Dendritic cell treated with granulocyte-macrophage colony-stimulating factor and Interleukin-4, amounts not matched to agents 40 ng/mL and 50 ng/mL, for 4 days (primary cell): ENCODE measurements at regions of chr19 and their contacts with region 1.

Region 1: GRCh38 chr19:1247892-1248785 is at the start of gene MIDN:
- H3K4me3 Mint-ChIP-seq: peak within 1 kb of the TSS; percentile 83
- H3K27ac Mint-ChIP-seq: peak within 1 kb of the TSS; percentile 93
- H3K4me1 Mint-ChIP-seq: peaks cover 48% of the 10 kb centered on the region
- H3K27me3 Mint-ChIP-seq: no peaks in the 10 kb centered on the region

Region 2: DNA sequence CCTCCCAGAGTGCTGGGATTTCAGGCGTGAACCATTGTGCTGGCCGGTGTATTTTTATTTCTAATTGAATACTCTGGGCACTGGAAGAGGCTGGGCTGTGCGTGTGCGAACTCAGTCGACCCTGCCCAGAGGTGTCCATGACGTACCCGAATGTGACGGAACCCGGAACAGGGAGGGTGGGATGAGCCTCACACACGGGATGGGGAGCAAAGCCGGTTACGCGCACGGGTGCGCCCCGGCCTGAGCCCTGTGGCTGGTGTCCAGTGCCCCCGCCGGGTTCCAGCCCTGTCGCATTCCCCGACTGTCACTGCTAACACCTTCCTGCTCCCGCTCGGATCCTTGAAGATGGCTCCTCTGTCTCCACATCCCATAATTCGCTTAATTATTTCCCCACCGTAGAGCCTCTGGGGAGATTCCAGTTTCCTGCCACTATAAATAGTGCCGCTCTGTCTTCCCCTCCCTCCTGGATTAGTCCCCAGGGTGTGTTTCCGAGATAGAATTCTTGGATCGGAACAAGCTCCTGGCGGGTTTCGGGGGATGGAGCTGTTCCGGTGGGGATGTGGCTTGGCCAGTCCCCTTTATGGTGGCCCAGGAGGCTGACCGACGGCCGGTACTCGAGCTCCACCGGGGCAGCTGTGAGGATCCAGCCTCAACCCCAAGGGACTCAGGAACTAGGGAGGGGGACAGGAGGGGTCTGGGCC is 96.1 kb before region 1 on chr19:
- intact Hi-C with region 1: no loop called
- H3K4me3 Mint-ChIP-seq: no peak overlapping the region
- H3K27ac Mint-ChIP-seq: peak overlapping the region; percentile 79
- H3K4me1 Mint-ChIP-seq: peaks cover 71% of the 10 kb centered on the region
- H3K27me3 Mint-ChIP-seq: no peaks in the 10 kb centered on the region

Region 3: DNA sequence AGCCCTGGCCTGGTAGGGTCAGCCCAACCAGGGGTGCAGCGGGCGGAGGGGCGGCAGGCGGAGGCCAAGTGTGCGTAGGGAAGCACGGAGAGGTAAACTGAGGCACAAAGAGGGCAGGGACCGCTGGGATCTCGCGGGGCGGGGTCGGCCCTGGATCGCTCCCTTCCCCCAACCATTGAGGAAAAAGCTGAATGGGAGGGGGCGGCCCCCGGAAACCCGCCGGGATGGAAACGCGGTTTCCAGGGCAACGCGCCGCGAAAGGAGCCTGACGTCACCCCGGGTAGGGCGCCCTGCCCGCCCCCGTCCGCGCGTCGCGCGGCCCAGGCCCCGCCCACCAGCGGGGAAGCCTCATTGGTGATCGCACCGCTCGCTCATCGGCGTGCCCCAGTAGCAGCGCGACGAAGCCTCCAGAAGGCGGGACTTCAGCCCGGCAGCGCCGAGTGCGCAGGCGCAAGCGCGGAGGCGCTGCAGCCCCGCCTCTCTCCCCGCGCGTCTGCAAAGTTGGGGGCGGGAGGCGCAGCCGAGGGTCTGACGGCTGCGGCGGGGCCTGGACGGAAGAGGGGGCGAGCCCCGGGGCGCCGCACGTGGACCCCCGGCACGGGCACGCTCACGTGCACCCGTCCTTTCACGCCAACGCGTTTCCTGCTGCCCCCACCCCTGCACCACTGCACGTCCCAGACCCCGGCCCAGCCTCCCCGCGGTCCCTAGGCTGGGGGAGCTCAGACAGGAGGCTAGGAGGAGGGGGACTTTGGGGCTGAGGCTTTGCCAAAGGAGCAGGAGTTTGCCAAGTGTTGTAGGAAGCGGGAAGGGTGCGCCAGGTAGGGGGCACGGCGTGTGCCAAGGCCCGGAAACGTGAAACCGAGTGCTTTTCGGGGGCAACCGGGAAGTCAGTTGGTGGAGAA is 12.7 kb after region 1 on chr19:
- intact Hi-C with region 1: loop called (anchors 1 kb)
- H3K4me3 Mint-ChIP-seq: peak overlapping the region; percentile 84
- H3K27ac Mint-ChIP-seq: peak overlapping the region; percentile 90
- H3K4me1 Mint-ChIP-seq: peaks cover 80% of the 10 kb centered on the region
- H3K27me3 Mint-ChIP-seq: peaks cover 2% of the 10 kb centered on the region

Region 4: DNA sequence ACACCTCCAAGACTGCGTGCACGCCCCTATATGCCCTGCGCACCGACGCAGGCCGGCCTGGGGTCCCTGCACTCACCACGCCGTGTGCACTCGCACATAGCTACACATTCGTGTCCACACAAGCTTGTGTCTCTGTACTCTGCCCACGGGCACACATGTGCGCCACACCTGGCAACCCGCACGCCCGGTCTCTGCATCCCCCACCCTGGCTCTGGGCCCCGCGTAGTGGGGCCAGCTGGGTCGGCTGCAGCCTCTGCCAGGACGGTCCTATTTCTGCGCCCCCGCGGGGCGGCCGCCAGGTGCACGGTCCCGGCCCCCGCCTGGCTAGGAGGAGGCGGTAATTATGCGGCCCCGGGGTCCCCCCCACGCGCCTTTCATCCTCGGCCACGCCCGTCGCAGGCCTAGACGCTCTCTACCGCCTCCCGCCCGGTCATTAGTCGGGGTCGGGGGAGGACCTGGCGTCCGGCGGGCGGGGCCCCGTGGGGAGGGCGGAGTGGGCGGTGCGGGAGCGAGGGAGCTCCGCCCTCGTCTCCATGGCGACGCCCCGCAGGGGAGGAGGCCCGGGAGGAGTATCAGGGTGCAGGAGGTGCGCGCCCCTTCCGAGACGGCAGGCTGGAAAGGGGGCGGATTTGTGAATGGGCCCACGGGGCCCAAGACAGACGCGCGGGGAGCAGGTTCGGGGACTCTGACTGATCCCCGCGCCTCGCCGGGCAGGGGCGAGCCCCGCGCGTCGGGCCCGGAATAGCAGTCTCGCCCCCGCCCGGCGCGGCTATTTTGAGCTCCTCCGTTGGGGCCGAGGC is 18.2 kb after region 1 on chr19:
- intact Hi-C with region 1: loop called (anchors 1 kb)
- H3K4me3 Mint-ChIP-seq: peak overlapping the region; percentile 66
- H3K27ac Mint-ChIP-seq: peak overlapping the region; percentile 90
- H3K4me1 Mint-ChIP-seq: peaks cover 83% of the 10 kb centered on the region
- H3K27me3 Mint-ChIP-seq: peaks cover 9% of the 10 kb centered on the region